HEK293 (cell line): ENCODE measurements at regions of chr6 and their contacts with region 1.

Region 1: GRCh38 chr6:89242574-89243330 is 25.6 kb upstream of the GABRR1 start:
- H3K4me3 ChIP-seq: no peak overlapping the region
- H3K27ac ChIP-seq: no peak overlapping the region
- H3K4me1 ChIP-seq: no peaks in the 10 kb centered on the region
- CTCF ChIP-seq: peak; percentile 68; the same call in 1 of the 2 replicates

Region 2: DNA sequence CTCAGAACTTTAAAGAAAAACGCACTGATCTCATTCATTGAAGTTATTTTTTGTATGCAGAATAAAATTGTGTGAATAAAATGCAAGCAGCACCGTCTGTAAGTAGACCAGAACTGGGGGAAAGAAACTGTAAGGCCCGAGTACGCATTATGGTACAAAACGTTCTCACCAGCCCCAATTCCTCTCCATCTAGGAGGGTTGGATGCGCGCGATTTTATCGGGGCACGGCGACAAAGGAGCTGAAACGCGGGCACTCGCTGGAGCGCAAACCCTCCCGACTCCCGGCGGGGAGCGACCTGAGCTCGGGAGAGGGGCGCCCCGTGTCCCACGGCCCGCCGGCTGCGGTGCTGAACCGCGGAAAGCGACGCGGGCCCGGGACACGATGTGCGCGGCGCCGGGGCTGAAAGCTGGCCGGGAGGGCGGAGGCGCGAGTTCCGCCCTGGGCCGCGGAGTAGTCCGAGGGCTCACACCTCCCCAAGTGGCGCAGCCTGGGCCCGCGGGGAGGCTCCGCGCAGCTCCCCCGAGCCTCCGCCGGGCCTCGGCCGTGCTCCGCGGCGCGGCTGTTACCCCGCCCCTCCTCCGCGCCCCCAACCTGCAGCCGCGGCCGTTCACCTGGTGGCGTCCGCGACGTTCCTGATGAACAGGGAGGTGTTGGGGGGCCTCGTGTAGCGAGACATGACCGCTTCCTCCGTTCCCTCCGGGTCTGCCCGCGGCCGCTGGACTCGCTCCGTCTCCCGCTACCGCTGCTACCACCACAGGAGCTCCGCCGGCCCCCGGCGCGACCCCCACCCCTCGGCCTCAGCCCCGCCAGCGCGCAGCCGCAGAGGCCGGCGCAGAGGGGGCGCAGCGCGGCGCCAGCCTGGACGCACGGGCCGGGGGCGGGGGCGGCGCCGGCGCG is 125.3 kb before region 1 on chr6 and contains the start of gene SRSF12:
- CTCF ChIA-PET with region 1: interaction called, 51 read pairs
- POLR2A ChIA-PET with region 1: no interaction called
- H3K4me3 ChIP-seq: peak within 1 kb of the TSS; percentile 58
- H3K27ac ChIP-seq: peak within 1 kb of the TSS; percentile 65; the same call in 1 of the 2 replicates
- H3K4me1 ChIP-seq: peaks cover 3% of the 10 kb centered on the region; the same call in 1 of the 2 replicates
- CTCF ChIP-seq: no peak; the same call in 1 of the 2 replicates

Region 3: GRCh38 chr6:89257346-89257745 is 14.6 kb after region 1 on chr6:
- CTCF ChIA-PET with region 1: interaction called, 12 read pairs
- POLR2A ChIA-PET with region 1: no interaction called
- H3K4me3 ChIP-seq: no peak overlapping the region
- H3K27ac ChIP-seq: no peak overlapping the region
- H3K4me1 ChIP-seq: no peaks in the 10 kb centered on the region; the same call in 1 of the 2 replicates
- CTCF ChIP-seq: no peak

Region 4: DNA sequence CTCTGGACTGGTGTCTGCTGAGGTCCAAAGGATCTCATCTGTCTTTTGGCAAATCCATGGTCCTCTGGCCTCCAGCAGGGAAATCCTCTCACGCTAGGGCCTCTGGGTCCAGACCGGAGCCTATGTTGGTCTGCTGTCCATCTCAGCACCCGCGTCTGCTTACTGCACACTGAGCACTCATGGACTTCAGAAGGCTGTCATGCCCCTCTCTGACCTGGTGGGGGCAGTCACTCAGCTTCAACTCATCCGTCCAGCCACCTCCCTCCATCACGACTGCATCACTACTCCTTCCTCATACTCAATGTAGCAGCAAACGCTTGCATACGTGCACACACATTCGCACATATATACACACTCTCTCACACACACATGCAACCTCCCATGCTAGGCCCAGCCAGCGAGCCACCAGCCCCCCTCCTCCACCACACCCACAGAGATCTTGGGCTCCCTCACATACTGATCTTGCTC is 39.1 kb after region 1 on chr6:
- CTCF ChIA-PET with region 1: interaction called, 12 read pairs
- POLR2A ChIA-PET with region 1: no interaction called
- H3K4me3 ChIP-seq: no peak overlapping the region
- H3K27ac ChIP-seq: no peak overlapping the region
- H3K4me1 ChIP-seq: no peaks in the 10 kb centered on the region
- CTCF ChIP-seq: peak; percentile 66